ENCODE measurements at regions of chr2 and their contacts with region 1.

Region 1: GRCh38 chr2:228516019-228516418 is 334.5 kb upstream of the SPHKAP start:
- DNase-seq: no peak
- H3K4me3 ChIP-seq: no peak overlapping the region
- H3K27ac ChIP-seq: no peak overlapping the region
- H3K4me1 ChIP-seq: no peaks in the 10 kb centered on the region
- H3K27me3 ChIP-seq: no peaks in the 10 kb centered on the region
- CTCF ChIP-seq: no peak
- POLR2A ChIP-seq: no peak

Region 2: DNA sequence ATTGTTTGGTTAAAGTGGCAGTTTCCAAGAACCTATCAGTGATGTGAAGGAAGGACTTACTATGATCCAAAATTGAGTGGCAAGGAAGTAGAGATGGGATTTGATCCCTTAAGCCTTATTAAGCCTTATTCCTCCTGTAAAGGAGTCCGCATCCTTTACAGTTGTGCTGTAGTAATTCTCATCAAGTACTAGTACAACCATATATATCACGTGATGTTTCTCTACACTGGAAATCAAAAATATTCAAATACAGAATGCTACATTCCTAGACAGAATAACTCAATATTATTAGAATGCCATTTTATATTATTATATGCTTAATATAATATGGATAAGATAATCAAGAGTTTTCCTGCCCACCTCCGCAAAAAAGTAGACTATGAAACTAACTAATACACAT is 22.2 kb before region 1 on chr2:
- intact Hi-C with region 1: loop called (anchors 1 kb)
- DNase-seq: no peak
- H3K4me3 ChIP-seq: no peak overlapping the region
- H3K27ac ChIP-seq: no peak overlapping the region
- H3K4me1 ChIP-seq: no peaks in the 10 kb centered on the region
- H3K27me3 ChIP-seq: no peaks in the 10 kb centered on the region
- CTCF ChIP-seq: no peak
- POLR2A ChIP-seq: no peak